Right ventricle myocardium superior (tissue), 1 donor: ENCODE measurements at regions of chr19 and their contacts with region 1.

Region 1: GRCh38 chr19:48806518-48806817 is 4.4 kb downstream of the BCAT2 start:
- DNase-seq: no peak
- ATAC-seq: no peak

Region 2: GRCh38 chr19:48637170-48637947 is 169.1 kb before region 1 on chr19 and contains the start of gene DBP:
- intact Hi-C with region 1: no loop called
- DNase-seq: peak; percentile 99
- ATAC-seq: peak; percentile 78
- total RNA-seq, gene DBP: 14.5 TPM

Region 3: GRCh38 chr19:48705431-48705830 is 101.0 kb before region 1 on chr19:
- intact Hi-C with region 1: no loop called
- DNase-seq: no peak
- ATAC-seq: no peak

Region 4: GRCh38 chr19:48770260-48770659 is 36.2 kb before region 1 on chr19:
- intact Hi-C with region 1: no loop called
- DNase-seq: no peak
- ATAC-seq: no peak

Region 5: GRCh38 chr19:48970923-48971395 is 164.5 kb after region 1 on chr19:
- intact Hi-C with region 1: loop called (anchors 10 kb)
- DNase-seq: peak; percentile 91
- ATAC-seq: peak; percentile 53

Region 6: GRCh38 chr19:49017666-49018351 is 211.3 kb after region 1 on chr19:
- intact Hi-C with region 1: no loop called
- DNase-seq: peak; percentile 63
- ATAC-seq: peak; percentile 73